CD4-positive, alpha-beta memory T cell (primary cell): ENCODE measurements at regions of chrX and their contacts with region 1.

Region 1: GRCh38 chrX:56248492-56248891 is 16.3 kb downstream of the KLF8 start:
- DNase-seq: peak; percentile 35 to 56 (median 49)
- H3K4me3 ChIP-seq: no peak overlapping the region
- H3K4me3 Mint-ChIP-seq: no peak overlapping the region
- H3K27ac ChIP-seq: no peak overlapping the region
- H3K27ac Mint-ChIP-seq: peak overlapping the region in 1 of 7 donors; percentile 29
- H3K4me1 ChIP-seq: no peaks in the 10 kb centered on the region
- H3K4me1 Mint-ChIP-seq: peaks cover 5 to 10% (median 6%) of the 10 kb centered on the region in 4 donors
- H3K27me3 ChIP-seq: no peaks in the 10 kb centered on the region
- H3K27me3 Mint-ChIP-seq: no peaks in the 10 kb centered on the region

Region 2: DNA sequence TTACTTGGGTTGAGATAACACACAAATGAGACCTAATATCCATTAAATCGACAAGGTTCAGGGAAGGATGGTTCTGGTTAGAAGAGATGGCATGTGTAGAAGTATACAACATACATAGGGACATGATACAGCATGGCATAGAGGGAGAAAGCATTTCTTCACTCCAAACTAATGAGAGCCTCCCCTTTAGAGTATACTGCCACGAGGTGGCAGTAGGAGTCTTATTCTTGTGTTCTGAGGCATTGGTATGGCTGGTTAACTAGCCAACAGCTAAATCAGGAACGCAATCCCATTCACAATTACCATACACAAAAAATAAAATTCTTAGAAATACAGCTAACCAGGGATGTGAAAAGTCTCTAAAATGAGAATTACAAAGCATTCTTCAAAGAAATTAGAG is 1356.9 kb before region 1 on chrX:
- CTCF ChIA-PET with region 1: no interaction called
- POLR2A ChIA-PET with region 1: no interaction called
- intact Hi-C with region 1: loop called (anchors 2 kb)
- DNase-seq: peak; percentile 31 to 43 (median 37)
- H3K4me3 ChIP-seq: no peak overlapping the region
- H3K4me3 Mint-ChIP-seq: no peak overlapping the region
- H3K27ac ChIP-seq: no peak overlapping the region
- H3K27ac Mint-ChIP-seq: no peak overlapping the region
- H3K4me1 ChIP-seq: no peaks in the 10 kb centered on the region
- H3K4me1 Mint-ChIP-seq: no peaks in the 10 kb centered on the region
- H3K27me3 ChIP-seq: no peaks in the 10 kb centered on the region
- H3K27me3 Mint-ChIP-seq: peaks cover 2 to 9% of the 10 kb centered on the region in 2 donors

Region 3: DNA sequence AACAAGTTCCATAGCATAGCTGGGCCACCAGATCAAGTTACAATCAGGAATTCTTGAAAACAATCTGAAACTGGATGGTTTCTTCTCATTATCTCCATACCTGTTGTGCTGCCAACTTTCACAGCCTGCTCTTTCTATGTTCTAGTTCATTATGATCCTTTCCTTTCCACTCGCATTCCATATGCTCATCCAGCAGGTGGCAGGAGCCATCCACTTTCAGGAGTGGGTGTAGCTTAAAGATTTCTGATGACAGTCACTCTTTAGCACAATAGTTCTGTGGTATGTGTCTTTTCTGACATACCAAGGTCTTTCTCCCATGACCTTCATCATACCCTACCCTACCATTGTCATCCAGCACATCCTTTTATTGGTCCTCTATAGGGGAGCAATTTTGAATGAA is 1113.3 kb before region 1 on chrX:
- CTCF ChIA-PET with region 1: interaction called, 6 read pairs
- POLR2A ChIA-PET with region 1: no interaction called
- intact Hi-C with region 1: loop called (anchors 2 kb)
- DNase-seq: peak; percentile 8 to 42 (median 11)
- H3K4me3 ChIP-seq: no peak overlapping the region
- H3K4me3 Mint-ChIP-seq: no peak overlapping the region
- H3K27ac ChIP-seq: no peak overlapping the region
- H3K27ac Mint-ChIP-seq: no peak overlapping the region
- H3K4me1 ChIP-seq: no peaks in the 10 kb centered on the region
- H3K4me1 Mint-ChIP-seq: no peaks in the 10 kb centered on the region
- H3K27me3 ChIP-seq: no peaks in the 10 kb centered on the region
- H3K27me3 Mint-ChIP-seq: no peaks in the 10 kb centered on the region

Region 4: GRCh38 chrX:55907968-55908607 is 340.4 kb before region 1 on chrX:
- CTCF ChIA-PET with region 1: interaction called, 18 read pairs
- POLR2A ChIA-PET with region 1: no interaction called
- intact Hi-C with region 1: loop called (anchors 5 kb)
- DNase-seq: peak; percentile 36 to 43 (median 39)
- H3K4me3 ChIP-seq: peak overlapping the region; percentile 47 to 78
- H3K4me3 Mint-ChIP-seq: peak overlapping the region; percentile 90 to 98 (median 92)
- H3K27ac ChIP-seq: peak overlapping the region; percentile 44
- H3K27ac Mint-ChIP-seq: peak overlapping the region; percentile 59 to 86 (median 73)
- H3K4me1 ChIP-seq: peaks cover 10% of the 10 kb centered on the region
- H3K4me1 Mint-ChIP-seq: peaks cover 8 to 24% (median 13%) of the 10 kb centered on the region in 4 donors
- H3K27me3 ChIP-seq: no peaks in the 10 kb centered on the region
- H3K27me3 Mint-ChIP-seq: no peaks in the 10 kb centered on the region

Region 5: GRCh38 chrX:56219700-56220099 is 28.8 kb before region 1 on chrX:
- CTCF ChIA-PET with region 1: interaction called, 34 read pairs
- POLR2A ChIA-PET with region 1: no interaction called
- intact Hi-C with region 1: no loop called
- DNase-seq: no peak
- H3K4me3 ChIP-seq: no peak overlapping the region
- H3K4me3 Mint-ChIP-seq: no peak overlapping the region
- H3K27ac ChIP-seq: no peak overlapping the region
- H3K27ac Mint-ChIP-seq: no peak overlapping the region
- H3K4me1 ChIP-seq: no peaks in the 10 kb centered on the region
- H3K4me1 Mint-ChIP-seq: no peaks in the 10 kb centered on the region
- H3K27me3 ChIP-seq: no peaks in the 10 kb centered on the region
- H3K27me3 Mint-ChIP-seq: no peaks in the 10 kb centered on the region

Region 6: GRCh38 chrX:56232221-56233082 is 16.0 kb before region 1 on chrX and contains the start of gene KLF8:
- CTCF ChIA-PET with region 1: interaction called, 12 read pairs
- POLR2A ChIA-PET with region 1: no interaction called
- intact Hi-C with region 1: loop called (anchors 2 kb)
- DNase-seq: peak; percentile 22 to 48 (median 31)
- H3K4me3 ChIP-seq: peak within 1 kb of the TSS; percentile 42 to 44
- H3K4me3 Mint-ChIP-seq: peak within 1 kb of the TSS; percentile 84 to 90 (median 86)
- H3K27ac ChIP-seq: peak within 1 kb of the TSS; percentile 31
- H3K27ac Mint-ChIP-seq: peak within 1 kb of the TSS; percentile 27 to 84 (median 74)
- H3K4me1 ChIP-seq: peaks cover 11% of the 10 kb centered on the region
- H3K4me1 Mint-ChIP-seq: peaks cover 12 to 32% (median 25%) of the 10 kb centered on the region in 4 donors
- H3K27me3 ChIP-seq: no peaks in the 10 kb centered on the region
- H3K27me3 Mint-ChIP-seq: no peaks in the 10 kb centered on the region
- total RNA-seq, gene KLF8: 5.4 to 7.0 TPM

Region 7: GRCh38 chrX:56284269-56284668 is 35.8 kb after region 1 on chrX:
- CTCF ChIA-PET with region 1: no interaction called
- POLR2A ChIA-PET with region 1: no interaction called
- intact Hi-C with region 1: no loop called
- DNase-seq: no peak
- H3K4me3 ChIP-seq: no peak overlapping the region
- H3K4me3 Mint-ChIP-seq: no peak overlapping the region
- H3K27ac ChIP-seq: no peak overlapping the region
- H3K27ac Mint-ChIP-seq: no peak overlapping the region
- H3K4me1 ChIP-seq: peaks cover 7% of the 10 kb centered on the region
- H3K4me1 Mint-ChIP-seq: peaks cover 7 to 9% (median 8%) of the 10 kb centered on the region in 4 donors
- H3K27me3 ChIP-seq: no peaks in the 10 kb centered on the region
- H3K27me3 Mint-ChIP-seq: no peaks in the 10 kb centered on the region